ENCODE measurements at regions of chr19 and their contacts with region 1.

Region 1: GRCh38 chr19:10653715-10654492 is at the start of gene ILF3:
- DNase-seq: peak; percentile 100
- ATAC-seq: peak; percentile 77
- H3K4me3 ChIP-seq: peak within 1 kb of the TSS; percentile 83
- H3K4me3 Mint-ChIP-seq: peak within 1 kb of the TSS; percentile 94
- H3K27ac ChIP-seq: peak within 1 kb of the TSS; percentile 98 to 99
- H3K27ac Mint-ChIP-seq: peak within 1 kb of the TSS; percentile 98
- H3K4me1 ChIP-seq: peaks cover 41% of the 10 kb centered on the region
- H3K4me1 Mint-ChIP-seq: peaks cover 44% of the 10 kb centered on the region
- H3K27me3 ChIP-seq: no peaks in the 10 kb centered on the region
- H3K27me3 Mint-ChIP-seq: no peaks in the 10 kb centered on the region
- CTCF ChIP-seq: no peak
- total RNA-seq, gene ILF3: 604 to 613 TPM

Region 2: GRCh38 chr19:10502524-10503001 is 151.3 kb before region 1 on chr19:
- CTCF ChIA-PET with region 1: no interaction called
- POLR2A ChIA-PET with region 1: no interaction called
- intact Hi-C with region 1: loop called (anchors 1 to 5 kb)
- DNase-seq: peak; percentile 74 to 93 (median 87)
- ATAC-seq: peak; percentile 90
- H3K4me3 ChIP-seq: peak overlapping the region; percentile 83 to 96
- H3K4me3 Mint-ChIP-seq: peak overlapping the region; percentile 83
- H3K27ac ChIP-seq: peak overlapping the region; percentile 73 to 75
- H3K27ac Mint-ChIP-seq: peak overlapping the region; percentile 71
- H3K4me1 ChIP-seq: peaks cover 11% of the 10 kb centered on the region
- H3K4me1 Mint-ChIP-seq: peaks cover 31% of the 10 kb centered on the region
- H3K27me3 ChIP-seq: no peaks in the 10 kb centered on the region
- H3K27me3 Mint-ChIP-seq: no peaks in the 10 kb centered on the region
- CTCF ChIP-seq: no peak

Region 3: DNA sequence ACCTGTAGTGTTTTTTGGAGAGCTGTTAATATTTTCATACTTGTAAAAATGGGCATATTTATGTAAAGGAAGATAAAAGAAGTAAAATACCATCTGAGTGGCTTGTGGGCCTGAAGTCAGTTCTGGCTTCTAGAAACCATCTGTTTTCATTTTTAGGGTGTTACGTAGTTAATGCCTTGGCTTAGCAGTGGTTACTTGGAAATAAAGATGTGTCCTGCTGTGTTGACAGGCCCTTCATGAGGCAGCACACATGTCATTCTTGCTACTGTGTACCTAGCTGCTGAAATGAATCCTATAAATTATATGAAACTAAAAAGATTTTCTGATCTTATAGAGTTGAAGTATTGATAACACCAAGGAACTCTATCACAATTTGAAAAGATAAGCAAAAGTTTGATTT is 16.3 kb after region 1 on chr19:
- CTCF ChIA-PET with region 1: no interaction called
- POLR2A ChIA-PET with region 1: interaction called, 6 read pairs
- intact Hi-C with region 1: loop called in 1 of 2 experiments (anchors 1 kb)
- DNase-seq: no peak
- ATAC-seq: no peak
- H3K4me3 ChIP-seq: no peak overlapping the region
- H3K4me3 Mint-ChIP-seq: no peak overlapping the region
- H3K27ac ChIP-seq: no peak overlapping the region
- H3K27ac Mint-ChIP-seq: no peak overlapping the region
- H3K4me1 ChIP-seq: peaks cover 18% of the 10 kb centered on the region
- H3K4me1 Mint-ChIP-seq: peaks cover 45% of the 10 kb centered on the region
- H3K27me3 ChIP-seq: no peaks in the 10 kb centered on the region
- H3K27me3 Mint-ChIP-seq: no peaks in the 10 kb centered on the region
- CTCF ChIP-seq: no peak

Region 4: GRCh38 chr19:10688545-10689280 is 34.8 kb after region 1 on chr19:
- CTCF ChIA-PET with region 1: no interaction called
- POLR2A ChIA-PET with region 1: no interaction called
- intact Hi-C with region 1: no loop called
- DNase-seq: peak in 1 of 9 experiments; percentile 14
- ATAC-seq: no peak
- H3K4me3 ChIP-seq: no peak overlapping the region
- H3K4me3 Mint-ChIP-seq: no peak overlapping the region
- H3K27ac ChIP-seq: no peak overlapping the region
- H3K27ac Mint-ChIP-seq: peak overlapping the region; percentile 49
- H3K4me1 ChIP-seq: no peaks in the 10 kb centered on the region
- H3K4me1 Mint-ChIP-seq: no peaks in the 10 kb centered on the region
- H3K27me3 ChIP-seq: no peaks in the 10 kb centered on the region
- H3K27me3 Mint-ChIP-seq: no peaks in the 10 kb centered on the region
- CTCF ChIP-seq: no peak

Region 5: DNA sequence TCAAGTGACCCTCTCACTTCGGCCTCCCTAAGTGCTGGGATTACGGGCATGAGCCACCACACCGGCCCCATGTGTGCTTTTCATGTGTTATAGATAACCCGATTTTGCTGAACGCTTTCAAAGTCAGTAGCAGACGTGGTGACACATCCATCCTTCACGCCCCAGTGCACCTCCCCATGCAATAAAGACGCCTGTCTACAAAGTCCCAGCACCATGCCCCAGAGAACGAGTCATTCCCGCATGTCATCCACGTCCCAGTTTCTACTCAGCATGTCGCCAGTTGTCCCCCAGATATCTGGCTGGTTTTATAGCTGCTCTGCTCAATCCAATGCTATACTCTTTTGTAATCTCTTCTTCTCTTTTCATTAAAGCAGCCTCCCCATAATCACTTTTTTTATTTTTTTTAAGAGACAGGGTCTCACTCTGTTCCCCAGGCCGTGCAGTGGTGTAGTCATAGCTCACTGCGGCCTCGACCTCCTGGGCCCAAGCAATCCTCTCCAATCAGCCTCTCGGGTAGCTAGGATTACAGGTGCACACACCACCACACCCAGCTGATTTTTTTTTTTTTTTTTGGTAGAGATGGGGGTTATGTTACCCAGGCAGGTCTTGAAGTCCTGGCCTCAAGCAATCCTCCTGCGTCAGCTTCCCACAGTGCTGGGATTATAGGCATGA is 106.5 kb after region 1 on chr19:
- CTCF ChIA-PET with region 1: no interaction called
- POLR2A ChIA-PET with region 1: no interaction called
- intact Hi-C with region 1: loop called in 1 of 2 experiments (anchors 1 kb)
- DNase-seq: peak in 5 of 9 experiments; percentile 36 to 67 (median 54)
- ATAC-seq: peak; percentile 30
- H3K4me3 ChIP-seq: peak overlapping the region in 1 of 2 experiments; percentile 39
- H3K4me3 Mint-ChIP-seq: peak overlapping the region; percentile 66
- H3K27ac ChIP-seq: peak overlapping the region; percentile 43 to 74
- H3K27ac Mint-ChIP-seq: peak overlapping the region; percentile 95
- H3K4me1 ChIP-seq: peaks cover 81% of the 10 kb centered on the region
- H3K4me1 Mint-ChIP-seq: peaks cover 82% of the 10 kb centered on the region
- H3K27me3 ChIP-seq: no peaks in the 10 kb centered on the region
- H3K27me3 Mint-ChIP-seq: no peaks in the 10 kb centered on the region
- CTCF ChIP-seq: no peak

Region 6: GRCh38 chr19:10870955-10871603 is 217.2 kb after region 1 on chr19 and contains the start of gene CARM1:
- CTCF ChIA-PET with region 1: no interaction called
- POLR2A ChIA-PET with region 1: no interaction called
- intact Hi-C with region 1: loop called (anchors 1 kb)
- DNase-seq: peak; percentile 97 to 99 (median 99)
- ATAC-seq: peak; percentile 87
- H3K4me3 ChIP-seq: peak within 1 kb of the TSS; percentile 59 to 62
- H3K4me3 Mint-ChIP-seq: peak within 1 kb of the TSS; percentile 89
- H3K27ac ChIP-seq: peak within 1 kb of the TSS; percentile 37 to 76
- H3K27ac Mint-ChIP-seq: peak within 1 kb of the TSS; percentile 84
- H3K4me1 ChIP-seq: peaks cover 17% of the 10 kb centered on the region
- H3K4me1 Mint-ChIP-seq: peaks cover 19% of the 10 kb centered on the region
- H3K27me3 ChIP-seq: no peaks in the 10 kb centered on the region
- H3K27me3 Mint-ChIP-seq: no peaks in the 10 kb centered on the region
- CTCF ChIP-seq: no peak
- total RNA-seq, gene CARM1: 18.1 to 21.3 TPM

Measured in CD8-positive, alpha-beta T cell (primary cell).